ENCODE measurements at regions of chr15 and their contacts with region 1.

Region 1: GRCh38 chr15:75073197-75073596 is 49.8 kb downstream of the PPCDC start:
- DNase-seq: peak in 1 of 2 donors; percentile 35
- ATAC-seq: no peak

Region 2: DNA sequence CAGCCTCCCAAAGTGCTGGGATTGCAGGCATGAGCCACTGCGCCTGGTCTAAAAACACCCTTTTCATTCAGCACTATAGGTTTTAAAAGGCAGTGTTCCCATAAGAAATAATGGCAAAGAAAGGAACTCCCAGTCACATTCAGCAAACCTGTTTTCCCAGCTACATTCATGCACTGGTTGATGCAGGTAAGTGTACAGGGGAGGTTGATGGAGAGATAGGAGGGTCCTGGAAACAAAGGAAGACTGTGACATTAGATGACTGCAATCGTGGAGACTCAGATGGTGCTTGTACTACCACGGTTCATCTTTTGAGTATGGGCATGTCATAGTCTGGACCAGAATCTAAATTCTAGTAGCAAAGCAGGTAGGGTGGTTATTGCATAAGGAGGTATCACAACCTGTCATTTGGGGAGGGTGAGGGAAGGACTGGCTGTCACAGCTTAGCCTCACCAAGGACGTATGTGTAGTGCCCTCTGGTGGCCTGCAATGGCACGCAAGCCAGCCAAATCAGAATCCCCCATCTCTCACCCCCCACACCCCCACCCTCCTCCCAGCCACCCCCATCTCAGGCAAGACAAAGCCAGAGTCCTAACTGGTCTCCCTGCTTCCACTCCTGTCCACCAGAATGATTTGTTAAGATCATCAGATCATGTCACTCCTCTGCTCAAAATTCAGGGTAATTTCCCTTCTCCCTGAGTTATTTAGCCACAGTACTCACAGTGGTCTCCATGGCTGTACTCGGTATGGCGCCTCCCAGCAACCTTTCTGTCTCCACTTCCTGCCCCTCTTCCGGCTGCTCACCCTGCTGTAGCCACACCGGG is 583.5 kb before region 1 on chr15:
- intact Hi-C with region 1: no loop called
- DNase-seq: peak; percentile 28 to 58
- ATAC-seq: peak; percentile 44

Region 3: DNA sequence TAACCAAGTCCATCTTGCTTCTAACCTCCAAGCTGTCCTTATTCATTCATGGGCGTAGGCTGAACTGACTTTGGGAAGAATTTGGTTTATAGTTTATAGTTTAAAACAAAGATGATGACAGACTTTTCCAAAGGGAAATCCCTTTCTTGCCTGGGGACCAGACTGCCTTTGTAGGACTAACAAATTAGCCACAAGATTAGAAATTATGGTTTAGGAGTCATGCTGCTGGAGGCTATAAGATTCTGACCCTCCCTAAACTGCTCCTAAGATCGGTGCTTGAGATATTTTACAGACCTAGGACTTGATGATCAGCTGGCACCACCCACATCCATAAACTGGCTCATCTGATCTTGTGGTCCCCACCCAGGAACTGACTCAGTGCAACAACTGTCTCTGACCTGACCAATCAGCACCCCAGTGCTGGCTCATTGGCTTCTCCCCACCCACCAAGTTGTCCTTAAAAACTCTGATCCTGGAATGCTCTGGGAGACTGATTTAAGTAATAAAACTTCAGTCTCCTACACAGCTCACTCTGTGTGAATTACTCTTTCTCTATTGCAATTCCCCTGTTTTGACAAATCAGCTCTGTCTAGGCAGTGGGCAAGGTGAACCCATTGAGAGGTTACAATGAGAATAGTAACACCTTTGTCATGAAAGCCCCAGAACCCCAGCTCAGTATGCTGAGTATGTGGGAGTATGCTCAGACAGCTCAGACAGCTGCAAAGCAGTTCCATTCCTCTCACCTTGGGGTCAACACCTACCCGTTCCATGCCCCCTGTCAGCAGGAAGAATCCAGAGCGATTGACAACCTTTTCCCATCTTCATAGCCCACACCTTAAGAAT is 76.9 kb after region 1 on chr15:
- intact Hi-C with region 1: loop called in 1 of 2 experiments (anchors 10 kb)
- DNase-seq: no peak
- ATAC-seq: peak; percentile 58

Measured in left colon (tissue), 2 donors.